Heart right ventricle (tissue), 16 donors: ENCODE measurements at regions of chr2 and their contacts with region 1.

Region 1: GRCh38 chr2:11129598-11130449 is 25.4 kb upstream of the SLC66A3 start:
- DNase-seq: peak in 1 of 2 donors; percentile 62
- ATAC-seq: peak; percentile 18 to 45 (median 29)
- H3K4me3 ChIP-seq: peak overlapping the region in 9 of 10 donors; percentile 12 to 51 (median 44)
- H3K27ac ChIP-seq: peak overlapping the region in 6 of 10 donors; percentile 19 to 65 (median 34)
- H3K4me1 ChIP-seq: peaks cover 9 to 43% (median 23%) of the 10 kb centered on the region in 9 donors
- H3K27me3 ChIP-seq: peaks cover 0 to 15% (median 0%) of the 10 kb centered on the region in 7 donors
- CTCF ChIP-seq: peak in 5 of 9 donors; percentile 20 to 42 (median 33)

Region 2: GRCh38 chr2:11203480-11203879 is 73.7 kb after region 1 on chr2:
- intact Hi-C with region 1: loop called in 1 of 10 experiments (anchors 5 kb)
- DNase-seq: no peak
- ATAC-seq: no peak
- H3K4me3 ChIP-seq: no peak overlapping the region
- H3K27ac ChIP-seq: peak overlapping the region in 1 of 10 donors; percentile 60
- H3K4me1 ChIP-seq: peaks cover 0 to 23% (median 0%) of the 10 kb centered on the region in 9 donors
- H3K27me3 ChIP-seq: no peaks in the 10 kb centered on the region
- CTCF ChIP-seq: no peak

Region 3: GRCh38 chr2:11292464-11293255 is 162.8 kb after region 1 on chr2:
- intact Hi-C with region 1: no loop called
- DNase-seq: peak in 1 of 2 donors; percentile 15
- ATAC-seq: peak; percentile 34 to 90 (median 78)
- H3K4me3 ChIP-seq: no peak overlapping the region
- H3K27ac ChIP-seq: peak overlapping the region in 8 of 10 donors; percentile 9 to 66 (median 40)
- H3K4me1 ChIP-seq: peaks cover 0 to 70% (median 39%) of the 10 kb centered on the region in 9 donors
- H3K27me3 ChIP-seq: no peaks in the 10 kb centered on the region
- CTCF ChIP-seq: no peak

Region 4: DNA sequence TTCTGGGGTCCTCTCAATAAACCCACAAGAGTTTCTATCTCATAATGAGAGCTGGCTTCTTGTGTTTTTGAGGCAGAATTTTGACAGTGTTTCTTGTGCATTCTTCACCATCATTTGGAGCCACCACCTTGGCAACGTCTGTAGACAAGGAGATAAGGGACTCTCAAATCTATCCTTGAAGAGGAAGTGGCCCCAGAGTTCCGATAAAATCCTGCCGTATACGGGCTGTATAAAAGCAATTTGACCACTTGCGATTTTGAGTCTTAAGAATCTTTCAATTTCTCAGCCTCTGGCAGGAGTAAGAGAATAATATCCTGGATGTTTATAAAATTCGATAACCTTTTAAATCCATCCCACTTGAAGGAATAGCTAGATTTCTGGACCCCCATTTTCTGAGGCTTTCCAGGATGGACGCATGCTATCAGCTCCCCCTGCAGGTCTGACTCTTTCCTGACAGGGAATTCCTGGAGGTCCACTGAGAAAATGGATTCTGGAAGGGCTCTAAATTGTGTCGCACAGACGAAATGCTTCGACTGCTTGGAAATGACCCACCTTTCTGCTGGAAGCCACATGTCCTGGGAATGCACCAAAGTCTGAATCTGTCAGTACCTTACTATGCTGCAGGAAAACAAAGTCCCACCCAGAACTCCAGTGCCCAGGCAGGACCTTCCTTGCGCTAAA is 282.1 kb after region 1 on chr2:
- intact Hi-C with region 1: loop called in 7 of 10 experiments (anchors 2 to 5 kb)
- DNase-seq: peak in 1 of 2 donors; percentile 80
- ATAC-seq: peak; percentile 38 to 85 (median 73)
- H3K4me3 ChIP-seq: peak overlapping the region in 9 of 10 donors; percentile 26 to 56 (median 46)
- H3K27ac ChIP-seq: peak overlapping the region in 4 of 10 donors; percentile 2 to 53 (median 26)
- H3K4me1 ChIP-seq: peaks cover 0 to 19% (median 10%) of the 10 kb centered on the region in 9 donors
- H3K27me3 ChIP-seq: no peaks in the 10 kb centered on the region
- CTCF ChIP-seq: peak; percentile 73 to 95 (median 86)

Region 5: DNA sequence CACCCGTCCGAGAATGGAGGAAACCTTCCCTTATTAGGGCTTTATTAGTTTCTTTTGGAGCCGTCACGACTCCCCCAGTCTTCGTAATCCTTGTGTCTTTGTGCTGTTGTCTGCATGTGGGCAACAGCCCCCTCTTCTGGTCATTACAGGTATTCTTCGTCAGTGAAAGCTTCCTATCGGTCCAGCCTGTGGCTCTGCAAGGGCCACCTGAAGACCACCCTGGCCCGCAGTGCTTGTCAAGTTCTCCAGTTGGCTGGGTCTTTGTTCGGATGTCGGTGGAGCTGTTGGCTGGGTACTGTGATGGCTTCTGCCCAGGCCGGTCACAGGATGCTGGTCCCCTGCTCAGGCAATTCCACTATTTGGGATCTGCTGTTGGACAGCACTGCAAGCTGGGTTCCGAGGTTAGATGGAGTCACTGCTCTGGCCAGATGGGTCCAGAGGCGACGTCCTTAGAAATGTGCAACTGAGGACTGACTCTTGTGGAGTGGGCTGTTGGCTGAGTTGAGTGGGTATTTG is 317.0 kb after region 1 on chr2:
- intact Hi-C with region 1: loop called in 9 of 10 experiments (anchors 2 to 10 kb)
- DNase-seq: peak in 1 of 2 donors; percentile 58
- ATAC-seq: peak; percentile 58 to 83 (median 80)
- H3K4me3 ChIP-seq: no peak overlapping the region
- H3K27ac ChIP-seq: no peak overlapping the region
- H3K4me1 ChIP-seq: no peaks in the 10 kb centered on the region
- H3K27me3 ChIP-seq: no peaks in the 10 kb centered on the region
- CTCF ChIP-seq: peak; percentile 71 to 92 (median 83)

Region 6: DNA sequence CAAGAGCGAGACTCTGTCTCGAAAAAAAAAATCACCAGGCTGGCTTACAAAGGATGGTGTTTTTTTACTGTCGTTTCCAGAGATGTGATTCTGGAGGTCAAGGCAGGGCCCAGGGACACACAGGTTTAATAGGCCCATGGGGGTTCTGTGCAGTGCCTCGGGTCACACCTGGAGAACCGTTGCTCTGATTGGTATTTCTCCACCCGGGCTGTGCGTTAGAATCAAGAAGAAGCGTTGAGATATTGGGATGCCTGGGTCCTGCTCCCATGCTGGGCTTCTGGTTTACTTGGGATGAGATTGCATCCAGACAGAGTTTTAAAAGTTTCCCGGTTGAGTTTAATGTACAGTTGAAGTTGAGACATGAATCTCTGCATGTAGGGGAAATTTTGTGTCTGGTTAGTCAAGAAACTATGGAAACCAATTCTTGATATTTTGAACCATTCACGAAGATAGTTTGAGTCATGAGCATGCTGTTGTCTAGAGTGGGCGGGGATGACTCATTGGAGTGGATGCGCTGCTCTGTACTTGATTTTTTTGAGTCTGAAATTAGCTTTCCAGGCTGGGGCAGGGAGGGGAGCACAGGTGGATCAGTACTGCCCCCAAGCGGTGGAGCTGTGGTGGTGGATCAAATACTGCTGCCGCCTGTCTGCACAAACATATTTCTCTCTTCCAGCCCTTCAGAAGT is 454.2 kb after region 1 on chr2:
- intact Hi-C with region 1: loop called in 5 of 10 experiments (anchors 5 to 10 kb)
- DNase-seq: peak; percentile 61 to 78
- ATAC-seq: peak; percentile 54 to 83 (median 79)
- H3K4me3 ChIP-seq: no peak overlapping the region
- H3K27ac ChIP-seq: peak overlapping the region in 8 of 10 donors; percentile 3 to 74 (median 56)
- H3K4me1 ChIP-seq: peaks cover 0 to 20% (median 6%) of the 10 kb centered on the region in 9 donors
- H3K27me3 ChIP-seq: no peaks in the 10 kb centered on the region
- CTCF ChIP-seq: peak; percentile 50 to 85 (median 81)